CD4-positive, alpha-beta T cell (primary cell): ENCODE measurements at regions of chr18 and their contacts with region 1.

Region 1: GRCh38 chr18:80034068-80034851 is at the start of gene RBFA:
- DNase-seq: peak; percentile 99 to 100 (median 100)
- ATAC-seq: peak; percentile 77
- H3K4me3 ChIP-seq: peak within 1 kb of the TSS; percentile 92
- H3K4me3 Mint-ChIP-seq: peak within 1 kb of the TSS; percentile 81
- H3K27ac ChIP-seq: peak within 1 kb of the TSS; percentile 83 to 96
- H3K27ac Mint-ChIP-seq: peak within 1 kb of the TSS; percentile 91
- H3K4me1 ChIP-seq: peaks cover 23% of the 10 kb centered on the region
- H3K4me1 Mint-ChIP-seq: peaks cover 41% of the 10 kb centered on the region
- H3K27me3 ChIP-seq: no peaks in the 10 kb centered on the region
- H3K27me3 Mint-ChIP-seq: no peaks in the 10 kb centered on the region
- CTCF ChIP-seq: peak; percentile 53
- total RNA-seq, gene RBFA: 11.2 to 12.3 TPM

Region 2: DNA sequence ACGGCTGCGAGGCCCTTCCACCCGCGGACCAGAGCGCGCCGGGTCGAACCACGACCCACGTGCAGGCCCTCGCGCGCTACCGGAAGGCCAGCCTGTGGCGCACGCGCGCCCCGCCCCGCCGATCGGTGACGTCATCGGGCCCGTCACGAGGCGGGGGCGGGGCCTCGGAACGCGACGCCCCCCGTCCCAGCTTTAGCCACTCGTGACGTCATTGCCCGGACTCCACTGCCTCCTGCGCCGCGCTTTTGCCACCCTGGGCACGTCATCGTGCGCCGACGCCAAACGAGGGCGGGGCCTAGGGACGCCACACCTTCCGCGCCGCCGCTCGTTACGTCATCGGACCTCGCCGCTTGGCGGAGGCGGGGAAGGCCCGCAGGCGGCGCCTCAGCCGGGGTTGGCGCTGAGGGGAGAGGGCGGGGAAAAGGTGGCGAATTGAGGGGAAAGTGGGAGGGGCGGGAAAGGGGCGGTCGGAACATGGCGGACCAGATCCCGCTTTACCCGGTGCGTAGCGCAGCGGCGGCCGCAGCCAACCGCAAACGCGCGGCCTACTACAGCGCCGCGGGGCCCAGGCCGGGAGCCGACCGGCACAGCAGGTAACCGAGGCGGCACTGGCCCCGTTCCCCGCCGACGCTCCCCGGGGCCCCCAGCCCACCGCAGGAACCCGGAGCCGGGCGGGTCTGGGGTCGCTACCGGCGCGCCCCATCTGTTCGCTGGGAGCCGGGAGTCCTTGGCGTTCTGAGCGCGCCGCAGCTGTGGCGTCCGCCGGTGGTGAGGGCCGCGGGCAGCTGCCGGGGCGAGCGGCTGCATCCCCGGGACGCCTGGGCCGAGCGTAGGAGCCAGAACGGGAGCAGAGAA is 965.1 kb before region 1 on chr18 and contains the start of gene ATP9B:
- CTCF ChIA-PET with region 1: no interaction called
- POLR2A ChIA-PET with region 1: no interaction called
- intact Hi-C with region 1: loop called in 1 of 2 experiments (anchors 5 kb)
- DNase-seq: peak; percentile 94 to 100 (median 98)
- ATAC-seq: peak; percentile 77
- H3K4me3 ChIP-seq: peak within 1 kb of the TSS; percentile 56
- H3K4me3 Mint-ChIP-seq: peak within 1 kb of the TSS; percentile 91
- H3K27ac ChIP-seq: peak within 1 kb of the TSS; percentile 97 to 98
- H3K27ac Mint-ChIP-seq: peak within 1 kb of the TSS; percentile 100
- H3K4me1 ChIP-seq: peaks cover 21% of the 10 kb centered on the region
- H3K4me1 Mint-ChIP-seq: peaks cover 60% of the 10 kb centered on the region
- H3K27me3 ChIP-seq: no peaks in the 10 kb centered on the region
- H3K27me3 Mint-ChIP-seq: peaks cover 7% of the 10 kb centered on the region
- CTCF ChIP-seq: no peak
- total RNA-seq, gene ATP9B: 61.9 to 63.5 TPM

Region 3: GRCh38 chr18:79400091-79400590 is 634.1 kb before region 1 on chr18:
- CTCF ChIA-PET with region 1: no interaction called
- POLR2A ChIA-PET with region 1: no interaction called
- intact Hi-C with region 1: loop called in 1 of 2 experiments (anchors 10 kb)
- DNase-seq: peak; percentile 53 to 86 (median 70)
- ATAC-seq: peak; percentile 5
- H3K4me3 ChIP-seq: peak overlapping the region; percentile 63
- H3K4me3 Mint-ChIP-seq: no peak overlapping the region
- H3K27ac ChIP-seq: peak overlapping the region; percentile 58 to 86
- H3K27ac Mint-ChIP-seq: no peak overlapping the region
- H3K4me1 ChIP-seq: peaks cover 76% of the 10 kb centered on the region
- H3K4me1 Mint-ChIP-seq: peaks cover 56% of the 10 kb centered on the region
- H3K27me3 ChIP-seq: no peaks in the 10 kb centered on the region
- H3K27me3 Mint-ChIP-seq: no peaks in the 10 kb centered on the region
- CTCF ChIP-seq: no peak

Region 4: GRCh38 chr18:79951578-79952455 is 82.4 kb before region 1 on chr18 and contains the start of gene SLC66A2:
- CTCF ChIA-PET with region 1: no interaction called
- POLR2A ChIA-PET with region 1: interaction called, 11 read pairs
- intact Hi-C with region 1: loop called (anchors 1 to 5 kb)
- DNase-seq: peak; percentile 86 to 99 (median 96)
- ATAC-seq: peak; percentile 91
- H3K4me3 ChIP-seq: peak within 1 kb of the TSS; percentile 62
- H3K4me3 Mint-ChIP-seq: peak within 1 kb of the TSS; percentile 87
- H3K27ac ChIP-seq: peak within 1 kb of the TSS in 1 of 2 donors; percentile 35
- H3K27ac Mint-ChIP-seq: peak within 1 kb of the TSS; percentile 80
- H3K4me1 ChIP-seq: peaks cover 36% of the 10 kb centered on the region
- H3K4me1 Mint-ChIP-seq: peaks cover 29% of the 10 kb centered on the region
- H3K27me3 ChIP-seq: no peaks in the 10 kb centered on the region
- H3K27me3 Mint-ChIP-seq: no peaks in the 10 kb centered on the region
- CTCF ChIP-seq: no peak
- total RNA-seq, gene SLC66A2: 44.5 to 44.8 TPM

Region 5: DNA sequence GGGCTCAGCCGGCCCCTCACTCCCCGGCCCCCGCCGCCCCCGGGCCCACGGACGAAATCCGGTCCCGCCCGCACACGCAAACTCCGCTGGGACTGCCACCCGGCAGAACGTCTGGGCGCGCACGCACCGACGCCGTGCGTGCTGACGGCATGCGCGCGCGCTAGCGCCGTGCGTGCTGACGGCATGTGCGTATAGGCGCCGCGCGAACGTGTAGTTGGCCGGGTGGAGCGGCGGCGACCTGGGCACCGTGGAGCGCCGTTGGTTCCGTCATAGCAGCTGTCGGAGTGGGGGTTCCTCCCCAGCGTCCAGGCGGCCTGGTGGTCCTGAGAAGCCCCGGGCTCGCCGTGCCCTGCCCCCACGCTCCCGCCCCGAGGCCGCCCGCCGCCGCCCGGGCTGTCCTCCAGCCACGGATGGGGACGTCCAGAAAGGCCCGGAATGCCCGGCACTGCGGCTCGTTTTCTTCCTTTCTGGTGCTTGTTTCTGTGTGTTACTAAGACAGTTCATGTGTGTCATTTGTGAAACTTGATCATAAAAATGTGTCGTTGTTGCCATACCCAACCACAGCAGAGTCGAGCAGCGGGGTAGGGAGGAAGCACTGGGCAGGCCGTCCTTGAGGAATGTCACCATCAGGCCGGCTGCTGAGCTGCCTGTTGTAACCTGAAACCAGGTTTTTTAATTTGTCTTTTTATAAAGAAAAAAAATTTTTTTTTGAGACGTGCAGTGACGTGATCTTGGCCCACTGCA is 45.6 kb before region 1 on chr18 and contains the start of gene TXNL4A:
- CTCF ChIA-PET with region 1: interaction called, 4 read pairs
- POLR2A ChIA-PET with region 1: interaction called, 26 read pairs
- intact Hi-C with region 1: loop called (anchors 1 kb)
- DNase-seq: peak; percentile 72 to 94 (median 82)
- ATAC-seq: peak; percentile 93
- H3K4me3 ChIP-seq: peak within 1 kb of the TSS; percentile 82
- H3K4me3 Mint-ChIP-seq: peak within 1 kb of the TSS; percentile 93
- H3K27ac ChIP-seq: peak within 1 kb of the TSS; percentile 84 to 89
- H3K27ac Mint-ChIP-seq: peak within 1 kb of the TSS; percentile 89
- H3K4me1 ChIP-seq: peaks cover 31% of the 10 kb centered on the region
- H3K4me1 Mint-ChIP-seq: peaks cover 39% of the 10 kb centered on the region
- H3K27me3 ChIP-seq: no peaks in the 10 kb centered on the region
- H3K27me3 Mint-ChIP-seq: no peaks in the 10 kb centered on the region
- CTCF ChIP-seq: no peak
- total RNA-seq, gene TXNL4A: 55.0 to 55.7 TPM